ENCODE measurements at regions of chr6 and their contacts with region 1.

Region 1: GRCh38 chr6:29847871-29848630 is 20.4 kb downstream of the HLA-G start:
- DNase-seq: peak; percentile 91
- ATAC-seq: peak; percentile 74
- H3K4me3 Mint-ChIP-seq: no peak overlapping the region
- H3K27ac Mint-ChIP-seq: no peak overlapping the region
- H3K4me1 Mint-ChIP-seq: peaks cover 25% of the 10 kb centered on the region
- H3K27me3 Mint-ChIP-seq: peaks cover 44% of the 10 kb centered on the region

Region 2: DNA sequence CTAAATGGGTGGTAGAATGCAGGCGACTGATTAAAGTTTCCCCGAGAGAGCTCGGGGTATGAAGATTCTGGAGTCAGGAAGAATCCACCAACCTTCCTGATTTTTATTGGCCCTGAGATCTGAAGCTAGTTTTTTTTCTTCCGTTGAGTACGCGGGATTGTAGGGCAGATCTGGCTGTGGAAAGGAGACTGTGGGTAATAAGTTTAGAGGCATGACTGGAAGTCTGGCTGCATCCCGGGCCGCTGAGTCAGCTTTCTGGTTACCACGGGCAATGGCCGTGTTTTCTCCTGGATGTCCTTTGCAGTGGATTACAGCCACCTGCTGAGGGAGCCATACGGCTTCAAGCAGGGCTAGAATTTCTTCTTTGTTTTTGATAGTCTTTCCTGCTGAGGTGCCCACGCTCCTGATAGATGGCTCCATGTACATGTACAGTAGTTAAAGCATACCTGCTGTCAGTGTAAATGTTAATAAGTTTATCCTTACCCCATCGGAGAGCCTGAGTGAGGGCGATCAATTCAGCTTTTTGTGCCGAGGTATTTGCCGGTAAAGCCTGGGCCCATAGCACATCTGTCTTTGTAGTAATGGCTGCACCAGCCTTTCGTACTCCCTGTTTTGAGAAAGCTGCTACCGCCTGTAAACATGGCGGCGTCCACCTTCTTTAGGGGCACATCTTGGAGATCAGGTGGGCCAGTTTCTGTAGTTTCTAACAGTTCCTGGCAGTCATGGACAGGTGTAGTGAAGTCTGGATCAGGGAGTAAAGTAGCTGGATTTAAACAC is 1078.2 kb before region 1 on chr6:
- CTCF ChIA-PET with region 1: no interaction called
- POLR2A ChIA-PET with region 1: no interaction called
- intact Hi-C with region 1: no loop called
- DNase-seq: no peak
- ATAC-seq: no peak
- H3K4me3 Mint-ChIP-seq: no peak overlapping the region
- H3K27ac Mint-ChIP-seq: no peak overlapping the region
- H3K4me1 Mint-ChIP-seq: peaks cover 7% of the 10 kb centered on the region
- H3K27me3 Mint-ChIP-seq: peaks cover 94% of the 10 kb centered on the region

Region 3: DNA sequence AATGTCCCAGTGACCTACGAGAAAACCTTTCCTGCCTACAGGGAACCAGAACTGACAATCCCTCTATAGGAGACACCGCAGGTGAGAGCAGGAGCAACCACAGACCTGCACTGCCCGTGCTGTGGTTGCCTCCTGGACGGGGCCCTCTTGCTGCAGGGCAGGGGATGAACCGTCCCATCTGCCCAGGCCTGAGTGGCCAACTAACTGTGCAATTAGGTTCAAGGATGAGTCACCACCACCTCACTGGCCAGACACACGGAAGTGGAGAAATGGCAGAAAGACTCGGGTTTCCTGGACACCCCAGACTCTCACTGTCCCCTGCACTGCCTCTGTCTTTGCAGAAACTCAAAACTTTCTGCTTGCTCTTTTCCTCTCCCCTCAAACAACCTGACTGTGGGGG is 34.2 kb before region 1 on chr6:
- CTCF ChIA-PET with region 1: no interaction called
- POLR2A ChIA-PET with region 1: no interaction called
- intact Hi-C with region 1: no loop called
- DNase-seq: no peak
- ATAC-seq: no peak
- H3K4me3 Mint-ChIP-seq: no peak overlapping the region
- H3K27ac Mint-ChIP-seq: no peak overlapping the region
- H3K4me1 Mint-ChIP-seq: peaks cover 8% of the 10 kb centered on the region
- H3K27me3 Mint-ChIP-seq: peaks cover 11% of the 10 kb centered on the region

Region 4: DNA sequence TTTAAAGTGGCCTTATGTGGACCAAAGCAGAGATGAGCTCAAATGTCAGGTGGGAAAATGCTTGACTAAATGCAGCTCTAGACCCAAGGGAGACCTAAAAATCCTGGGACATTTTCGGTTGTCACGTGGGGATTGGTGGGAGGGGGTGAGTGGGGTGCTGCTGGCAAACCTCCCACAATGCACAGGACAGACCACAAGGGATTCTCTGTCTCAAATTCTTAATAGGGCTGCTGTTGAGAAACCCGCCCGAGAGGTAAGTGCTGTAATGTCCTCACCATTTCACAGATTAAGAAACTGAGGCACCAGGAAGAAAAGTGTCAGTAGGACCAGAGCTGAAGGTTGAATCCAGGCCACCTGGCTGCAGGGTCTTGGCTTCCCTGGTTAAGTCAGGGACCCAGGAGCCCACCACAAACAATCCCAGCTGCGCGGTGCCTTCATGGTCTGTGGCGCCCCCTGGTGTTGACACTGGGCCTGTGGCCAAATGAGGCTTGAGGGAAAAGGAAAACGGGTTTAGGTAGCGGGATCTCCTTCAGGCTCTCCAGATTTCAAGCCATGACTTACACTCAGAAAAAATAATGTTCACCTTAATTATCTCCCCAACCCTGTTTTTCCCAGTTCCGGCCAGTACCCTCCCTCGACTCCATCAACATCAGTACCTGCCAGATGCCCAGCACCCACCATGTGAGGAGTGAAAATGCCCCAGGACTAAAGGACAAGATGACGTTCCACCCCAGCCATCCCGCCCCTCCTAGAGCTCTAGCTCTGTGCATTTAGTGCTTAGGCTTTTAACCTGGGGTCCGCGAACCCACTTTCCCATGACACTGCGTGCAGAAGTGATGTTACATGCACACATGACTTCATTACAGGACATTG is 13.3 kb before region 1 on chr6:
- CTCF ChIA-PET with region 1: interaction called, 10 read pairs
- POLR2A ChIA-PET with region 1: no interaction called
- intact Hi-C with region 1: no loop called
- DNase-seq: peak; percentile 72
- ATAC-seq: no peak
- H3K4me3 Mint-ChIP-seq: no peak overlapping the region
- H3K27ac Mint-ChIP-seq: no peak overlapping the region
- H3K4me1 Mint-ChIP-seq: peaks cover 2% of the 10 kb centered on the region
- H3K27me3 Mint-ChIP-seq: peaks cover 44% of the 10 kb centered on the region

Region 5: DNA sequence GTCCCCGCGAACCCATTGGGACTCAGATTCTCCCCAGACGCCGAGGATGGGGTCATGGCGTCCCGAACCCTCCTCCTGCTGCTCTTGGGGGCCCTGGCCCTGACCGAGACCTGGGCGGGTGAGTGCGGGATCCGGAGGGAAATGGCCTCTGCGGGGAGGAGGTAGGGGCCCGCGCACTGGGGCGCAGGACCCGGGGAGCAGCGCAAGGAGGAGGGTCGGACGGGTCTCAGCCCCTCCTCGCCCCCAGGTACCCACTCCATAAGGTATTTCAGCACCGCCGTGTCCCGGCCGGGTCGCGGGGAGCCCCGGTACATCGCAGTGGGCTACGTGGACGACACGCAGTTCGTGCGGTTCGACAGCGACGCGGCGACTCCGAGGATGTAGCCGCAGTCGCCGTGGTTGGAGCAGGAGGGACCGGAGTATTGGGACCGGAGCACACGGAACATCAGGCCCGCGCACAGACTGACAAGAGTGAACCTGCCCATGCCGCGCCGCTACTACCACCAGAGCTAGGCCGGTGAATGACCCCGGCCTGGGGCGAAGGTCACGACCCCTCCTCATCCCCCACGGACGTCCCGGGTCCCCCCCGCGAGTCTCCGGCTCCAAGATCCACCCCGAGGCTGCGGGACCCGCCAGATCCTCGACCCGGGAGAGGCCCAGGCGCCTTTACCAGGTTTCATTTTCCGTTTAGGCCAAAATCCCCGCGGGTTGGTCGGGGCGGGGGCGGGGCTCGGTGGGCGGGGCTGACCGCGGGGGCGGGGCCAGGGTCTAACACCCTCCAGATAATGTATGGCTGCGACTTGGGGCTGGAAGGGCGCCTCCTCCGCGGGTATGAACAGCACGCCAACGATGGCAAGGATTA is 78.6 kb after region 1 on chr6:
- CTCF ChIA-PET with region 1: no interaction called
- POLR2A ChIA-PET with region 1: no interaction called
- intact Hi-C with region 1: loop called (anchors 1 to 5 kb)
- DNase-seq: peak; percentile 92
- ATAC-seq: peak; percentile 91
- H3K4me3 Mint-ChIP-seq: peak overlapping the region; percentile 82
- H3K27ac Mint-ChIP-seq: peak overlapping the region; percentile 94
- H3K4me1 Mint-ChIP-seq: peaks cover 32% of the 10 kb centered on the region
- H3K27me3 Mint-ChIP-seq: no peaks in the 10 kb centered on the region

Region 6: GRCh38 chr6:29976588-29977424 is 128.8 kb after region 1 on chr6:
- CTCF ChIA-PET with region 1: interaction called, 8 read pairs
- POLR2A ChIA-PET with region 1: no interaction called
- intact Hi-C with region 1: loop called in 1 of 2 experiments (anchors 1 kb)
- DNase-seq: peak; percentile 77
- ATAC-seq: peak; percentile 86
- H3K4me3 Mint-ChIP-seq: peak overlapping the region; percentile 71
- H3K27ac Mint-ChIP-seq: peak overlapping the region; percentile 57
- H3K4me1 Mint-ChIP-seq: peaks cover 26% of the 10 kb centered on the region
- H3K27me3 Mint-ChIP-seq: peaks cover 37% of the 10 kb centered on the region

Region 7: DNA sequence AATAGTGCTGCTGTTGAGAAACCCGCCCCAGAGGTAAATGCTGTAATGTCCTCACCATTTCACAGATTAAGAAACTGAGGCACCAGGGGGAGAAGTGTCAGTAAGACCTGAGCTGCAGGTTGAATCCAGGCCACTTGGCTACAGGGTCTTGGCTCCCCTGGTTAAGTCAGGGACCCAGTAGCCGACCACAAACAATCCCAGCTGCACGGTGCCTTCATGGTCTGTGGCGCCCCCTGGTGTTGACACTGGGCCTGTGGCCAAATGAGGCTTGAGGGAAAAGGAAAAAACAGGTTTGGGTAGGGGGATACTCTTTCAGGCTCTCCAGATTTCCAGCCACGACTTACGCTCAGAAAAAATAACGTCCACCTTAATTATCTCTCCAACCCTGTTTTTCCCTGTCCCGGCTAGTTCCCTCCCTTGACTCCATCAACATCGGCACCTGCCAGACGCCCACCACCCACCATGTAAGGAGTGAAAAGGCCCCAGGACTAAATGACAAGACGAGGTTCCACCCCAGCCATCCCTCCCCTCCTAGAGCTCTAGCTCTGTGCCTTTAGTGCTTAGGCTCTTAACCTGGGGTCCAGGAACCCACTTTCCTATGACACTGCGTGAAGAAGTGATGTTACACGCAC is 165.4 kb after region 1 on chr6:
- CTCF ChIA-PET with region 1: interaction called, 22 read pairs
- POLR2A ChIA-PET with region 1: no interaction called
- intact Hi-C with region 1: loop called (anchors 1 kb)
- DNase-seq: peak; percentile 67
- ATAC-seq: no peak
- H3K4me3 Mint-ChIP-seq: no peak overlapping the region
- H3K27ac Mint-ChIP-seq: no peak overlapping the region
- H3K4me1 Mint-ChIP-seq: no peaks in the 10 kb centered on the region
- H3K27me3 Mint-ChIP-seq: peaks cover 6% of the 10 kb centered on the region

Region 8: DNA sequence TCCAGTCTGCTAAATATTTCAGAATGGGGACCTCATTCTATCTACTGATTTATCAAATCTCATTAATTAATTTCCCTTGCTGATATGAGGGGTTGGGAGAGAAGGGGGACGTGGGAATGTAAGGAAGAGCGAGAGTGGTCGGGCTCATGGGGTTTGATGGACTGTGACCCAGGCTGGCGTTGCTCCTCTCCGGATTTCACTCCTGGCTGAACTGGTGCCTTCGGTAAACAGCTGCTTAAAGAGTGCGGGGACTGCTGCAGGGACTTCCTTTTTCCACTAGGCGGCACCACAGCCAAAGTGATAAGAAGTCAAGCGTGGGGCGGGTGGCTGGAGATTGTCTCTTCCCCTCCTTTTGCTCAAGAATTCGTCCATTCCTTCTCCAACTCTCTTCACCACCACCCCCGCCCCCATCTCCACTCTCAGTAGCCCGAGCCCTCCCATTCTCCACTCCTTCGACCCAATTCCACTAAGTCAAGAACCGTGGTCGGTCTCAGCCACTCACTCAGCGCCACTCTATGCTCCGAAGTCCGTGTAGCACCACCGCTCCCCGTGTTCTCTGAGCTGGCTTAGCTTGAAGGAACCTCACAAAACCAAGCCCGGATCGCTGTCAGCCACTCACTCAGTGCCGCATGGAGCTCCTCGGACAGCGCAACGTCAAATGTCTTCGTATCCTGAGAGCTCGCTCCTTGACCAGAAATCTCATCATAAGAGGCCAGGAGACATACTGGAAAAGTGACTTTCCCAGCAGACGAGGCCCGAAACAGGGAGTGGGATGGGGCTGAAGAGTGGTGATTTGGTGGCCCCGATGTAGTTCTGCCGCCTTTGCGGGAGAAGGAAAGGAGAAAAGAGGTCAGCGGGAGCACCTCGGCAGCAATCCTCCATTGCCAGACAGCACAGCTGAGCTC is 255.2 kb after region 1 on chr6:
- CTCF ChIA-PET with region 1: no interaction called
- POLR2A ChIA-PET with region 1: no interaction called
- intact Hi-C with region 1: no loop called
- DNase-seq: peak; percentile 90
- ATAC-seq: peak; percentile 79
- H3K4me3 Mint-ChIP-seq: peak overlapping the region; percentile 73
- H3K27ac Mint-ChIP-seq: peak overlapping the region; percentile 65
- H3K4me1 Mint-ChIP-seq: peaks cover 36% of the 10 kb centered on the region
- H3K27me3 Mint-ChIP-seq: peaks cover 47% of the 10 kb centered on the region

Region 9: DNA sequence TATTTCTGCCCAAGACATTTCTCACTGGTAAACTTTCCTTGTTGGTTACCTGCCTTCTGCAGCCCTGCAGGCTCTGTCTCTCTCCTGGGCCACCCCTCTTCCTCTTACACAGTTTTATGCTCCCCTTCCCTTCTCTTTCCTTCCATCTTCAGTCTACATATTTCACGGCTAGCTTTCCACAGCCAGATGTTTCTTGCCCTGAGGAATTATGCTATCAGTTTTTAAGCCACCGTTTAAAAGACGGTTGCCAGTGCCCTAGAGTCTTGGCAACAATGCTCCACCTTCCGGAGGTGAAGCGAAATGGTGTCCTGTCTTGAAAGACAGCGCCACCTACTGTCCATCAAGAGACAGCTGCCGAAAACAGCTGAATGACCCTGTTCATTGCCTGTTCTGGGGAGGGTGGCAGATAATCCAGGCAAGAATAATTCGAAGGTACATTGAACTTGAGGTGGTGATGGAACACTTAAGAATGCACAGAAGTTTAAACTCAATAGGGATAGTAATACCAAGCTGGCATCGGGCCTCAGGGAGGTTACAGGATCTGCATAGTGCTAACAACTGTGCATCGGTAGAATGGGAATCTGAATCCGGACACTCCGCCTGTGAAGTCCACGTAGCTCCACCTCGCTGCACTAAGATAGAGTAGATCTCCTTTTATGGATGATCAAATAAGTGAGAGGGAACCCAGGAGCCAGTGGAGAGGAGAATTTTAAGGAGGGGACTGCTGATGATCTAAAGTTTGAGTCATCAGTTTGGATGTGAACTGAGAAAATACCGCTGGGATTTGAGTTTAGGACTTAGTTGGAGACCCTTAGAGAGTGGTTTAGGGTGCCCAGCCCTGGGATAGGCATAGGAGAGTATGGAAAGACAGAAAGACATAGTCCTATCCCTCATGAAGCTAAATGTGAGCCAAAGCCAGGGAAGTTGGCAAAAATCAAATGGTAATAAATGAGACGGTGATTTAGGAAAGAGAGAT is 283.1 kb after region 1 on chr6:
- CTCF ChIA-PET with region 1: interaction called, 3 read pairs
- POLR2A ChIA-PET with region 1: no interaction called
- intact Hi-C with region 1: loop called (anchors 1 to 5 kb)
- DNase-seq: peak; percentile 79
- ATAC-seq: peak; percentile 90
- H3K4me3 Mint-ChIP-seq: no peak overlapping the region
- H3K27ac Mint-ChIP-seq: no peak overlapping the region
- H3K4me1 Mint-ChIP-seq: peaks cover 27% of the 10 kb centered on the region
- H3K27me3 Mint-ChIP-seq: peaks cover 62% of the 10 kb centered on the region

Region 10: DNA sequence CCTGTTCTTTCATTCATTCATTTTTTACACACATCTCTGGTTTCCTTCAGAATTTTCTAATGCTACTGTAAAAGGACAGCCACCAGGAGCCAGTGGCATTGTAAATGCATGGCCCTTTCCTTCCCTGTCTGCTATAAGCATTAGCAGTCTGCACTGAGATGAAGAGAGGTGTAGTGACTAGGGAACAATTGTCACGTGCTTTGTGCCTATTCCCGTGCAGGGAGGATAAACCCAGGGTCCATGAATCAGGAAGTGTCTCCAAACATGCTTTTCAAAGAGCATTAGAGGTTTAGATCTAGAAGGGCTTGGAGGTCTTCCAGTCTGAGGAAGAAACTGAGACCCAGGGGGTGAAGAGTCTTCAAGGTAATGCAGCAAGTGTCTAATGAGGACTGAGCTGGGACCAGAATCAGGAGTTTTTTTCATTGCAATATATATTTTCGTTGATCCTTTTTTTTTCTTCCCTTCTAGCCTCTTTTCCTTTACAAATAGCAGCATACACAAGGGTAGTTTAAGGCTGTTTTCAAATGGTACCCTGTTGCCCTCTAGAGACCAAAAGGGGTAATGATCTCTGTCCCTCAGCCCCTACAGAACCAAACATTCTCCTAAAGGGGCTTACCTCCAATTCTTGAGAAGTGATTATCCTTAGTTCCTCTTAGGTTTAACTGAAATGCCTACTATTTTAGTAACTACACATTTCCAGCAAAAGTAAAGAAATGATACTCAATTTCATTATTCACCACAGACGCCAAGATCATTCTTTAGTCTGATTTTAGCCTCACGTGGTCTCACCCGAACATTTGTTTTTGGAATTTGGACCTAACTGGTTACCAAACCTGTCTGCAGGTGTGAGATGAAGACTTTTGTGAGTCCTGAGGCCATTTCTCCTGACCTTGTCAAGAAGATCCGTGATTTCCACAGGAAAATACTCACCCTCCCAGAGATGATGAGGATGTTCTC is 321.9 kb after region 1 on chr6:
- CTCF ChIA-PET with region 1: interaction called, 3 read pairs
- POLR2A ChIA-PET with region 1: no interaction called
- intact Hi-C with region 1: loop called (anchors 2 to 5 kb)
- DNase-seq: peak; percentile 16
- ATAC-seq: peak; percentile 83
- H3K4me3 Mint-ChIP-seq: no peak overlapping the region
- H3K27ac Mint-ChIP-seq: no peak overlapping the region
- H3K4me1 Mint-ChIP-seq: peaks cover 12% of the 10 kb centered on the region
- H3K27me3 Mint-ChIP-seq: peaks cover 38% of the 10 kb centered on the region